ENCODE measurements at regions of chr2 and their contacts with region 1.

Region 1: DNA sequence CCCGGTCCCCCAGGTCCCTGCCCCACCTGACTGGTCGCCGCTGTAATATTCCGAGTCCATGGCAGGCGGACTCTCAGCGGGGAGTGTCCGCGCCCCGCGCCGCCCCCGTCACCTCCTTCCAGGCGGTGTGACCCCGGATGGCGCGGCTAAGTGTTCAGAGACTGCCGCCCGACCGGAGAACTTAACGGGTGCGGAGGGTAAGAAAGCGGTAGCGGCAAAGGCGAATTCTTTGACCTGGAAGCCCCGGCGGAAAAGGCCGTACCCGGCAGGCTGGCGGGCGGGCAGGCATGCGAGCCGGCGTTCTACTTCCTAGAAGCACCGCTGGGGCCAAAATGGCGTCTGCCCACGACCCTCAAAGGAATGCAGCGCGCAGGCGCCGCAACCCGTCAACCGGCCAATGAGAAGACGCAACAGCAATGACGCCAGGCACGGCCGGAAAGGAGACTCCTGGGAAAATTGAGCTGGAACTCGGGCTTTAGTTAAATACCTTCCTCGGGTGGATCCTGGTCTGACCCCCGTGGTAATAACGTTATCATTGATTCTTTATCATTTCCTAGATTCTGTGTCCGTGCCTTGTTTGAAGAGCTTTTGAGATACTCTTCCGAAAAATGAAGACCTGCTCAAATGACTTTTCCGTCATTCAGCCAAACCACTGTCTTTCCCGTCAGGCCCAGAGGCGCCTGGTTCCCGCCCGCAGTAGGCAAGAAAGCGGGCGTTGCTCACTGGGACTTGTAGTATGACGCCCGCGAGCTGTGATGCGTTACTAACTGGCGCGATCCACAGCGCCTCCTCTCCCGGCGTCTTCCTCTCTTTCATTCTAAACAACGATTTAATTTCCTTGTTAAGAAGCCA is at the start of gene IWS1:
- DNase-seq: peak; percentile 97
- H3K4me3 ChIP-seq: peak within 1 kb of the TSS; percentile 82
- H3K27ac ChIP-seq: peak within 1 kb of the TSS; percentile 85
- H3K4me1 ChIP-seq: peaks cover 26% of the 10 kb centered on the region
- CTCF ChIP-seq: peak; percentile 60; the same call in 1 of the 2 replicates
- total RNA-seq, gene IWS1: 49.2 and 70.4 TPM in 2 replicates

Region 2: DNA sequence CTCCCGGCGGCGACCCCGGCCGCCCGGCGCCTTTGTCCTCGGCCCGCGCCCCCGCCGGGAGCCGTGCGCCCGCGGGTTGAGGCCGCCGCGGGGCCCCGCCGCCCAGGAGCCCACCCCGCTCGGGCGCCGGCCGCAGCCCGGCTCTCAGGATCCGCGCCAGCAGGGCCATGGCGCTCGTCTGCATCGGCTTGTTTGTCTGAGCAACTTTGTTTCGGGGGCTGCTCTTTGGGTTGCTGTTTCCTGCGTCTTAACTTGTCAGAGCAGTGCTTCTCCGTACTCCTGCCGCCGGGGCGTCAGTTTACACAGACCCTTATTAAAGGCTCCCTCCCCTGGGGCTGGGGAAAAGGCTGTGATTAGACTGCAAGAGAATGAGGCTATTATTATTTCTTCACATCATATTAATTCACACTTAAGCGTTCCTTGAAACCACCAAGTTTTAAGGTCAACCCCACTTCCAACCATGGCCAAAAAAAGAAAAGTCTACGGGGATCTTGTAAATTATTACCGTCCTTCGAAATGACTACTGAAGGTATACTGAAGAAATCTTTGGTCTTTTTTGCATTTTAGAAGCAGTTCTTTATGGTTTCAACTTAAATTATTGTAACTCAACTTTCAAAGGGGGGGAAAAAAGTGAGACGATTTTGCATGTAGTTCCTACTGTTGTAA is 306.1 kb before region 1 on chr2 and contains the start of gene CYP27C1:
- CTCF ChIA-PET with region 1: no interaction called
- POLR2A ChIA-PET with region 1: no interaction called
- intact Hi-C with region 1: no loop called
- DNase-seq: no peak
- H3K4me3 ChIP-seq: no peak within 1 kb of the TSS
- H3K27ac ChIP-seq: no peak within 1 kb of the TSS
- H3K4me1 ChIP-seq: no peaks in the 10 kb centered on the region
- CTCF ChIP-seq: no peak
- total RNA-seq, gene CYP27C1: not detected in 2 replicates

Region 3: DNA sequence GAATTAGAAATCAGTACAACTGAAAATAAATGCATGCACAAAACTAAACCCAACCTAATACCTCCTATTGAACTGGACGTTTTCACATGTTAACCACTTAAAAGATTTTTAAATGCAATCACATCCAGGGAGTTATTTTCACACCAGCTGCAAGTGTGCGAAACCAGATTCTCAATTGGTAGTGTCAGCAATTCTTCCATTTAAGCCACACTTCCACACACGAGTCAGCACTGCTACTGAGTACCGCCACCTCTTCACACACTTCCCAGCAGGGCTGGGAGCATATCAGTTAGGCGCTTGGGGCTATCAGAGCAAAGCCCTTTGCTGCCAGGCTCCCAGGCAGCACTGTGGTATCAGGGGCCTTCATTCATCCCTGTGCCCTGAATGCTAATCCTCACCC is 246.6 kb before region 1 on chr2:
- CTCF ChIA-PET with region 1: no interaction called
- POLR2A ChIA-PET with region 1: no interaction called
- intact Hi-C with region 1: no loop called
- DNase-seq: no peak
- H3K4me3 ChIP-seq: no peak overlapping the region
- H3K27ac ChIP-seq: no peak overlapping the region
- H3K4me1 ChIP-seq: no peaks in the 10 kb centered on the region
- CTCF ChIP-seq: no peak

Region 4: GRCh38 chr2:128027801-128028667 is 501.7 kb after region 1 on chr2 and contains the start of gene SAP130:
- CTCF ChIA-PET with region 1: no interaction called
- POLR2A ChIA-PET with region 1: no interaction called
- intact Hi-C with region 1: loop called (anchors 2 kb)
- DNase-seq: peak; percentile 97
- H3K4me3 ChIP-seq: peak within 1 kb of the TSS; percentile 93
- H3K27ac ChIP-seq: peak within 1 kb of the TSS; percentile 70
- H3K4me1 ChIP-seq: peaks cover 11% of the 10 kb centered on the region
- CTCF ChIP-seq: 0 out of 2 replicates have a peak, but pooled peaks have one; percentile 21
- total RNA-seq, gene SAP130: 6.7 and 9.6 TPM in 2 replicates

Measured in OCI-LY7 (cell line).